Activated naive CD8-positive, alpha-beta T cell treated with anti-CD3 and anti-CD28 coated beads, Interleukin-2, amount 10 ng/mL, durations not matched to agents 7 days and 5 days (primary cell): ENCODE measurements at regions of chr2 and their contacts with region 1.

Region 1: DNA sequence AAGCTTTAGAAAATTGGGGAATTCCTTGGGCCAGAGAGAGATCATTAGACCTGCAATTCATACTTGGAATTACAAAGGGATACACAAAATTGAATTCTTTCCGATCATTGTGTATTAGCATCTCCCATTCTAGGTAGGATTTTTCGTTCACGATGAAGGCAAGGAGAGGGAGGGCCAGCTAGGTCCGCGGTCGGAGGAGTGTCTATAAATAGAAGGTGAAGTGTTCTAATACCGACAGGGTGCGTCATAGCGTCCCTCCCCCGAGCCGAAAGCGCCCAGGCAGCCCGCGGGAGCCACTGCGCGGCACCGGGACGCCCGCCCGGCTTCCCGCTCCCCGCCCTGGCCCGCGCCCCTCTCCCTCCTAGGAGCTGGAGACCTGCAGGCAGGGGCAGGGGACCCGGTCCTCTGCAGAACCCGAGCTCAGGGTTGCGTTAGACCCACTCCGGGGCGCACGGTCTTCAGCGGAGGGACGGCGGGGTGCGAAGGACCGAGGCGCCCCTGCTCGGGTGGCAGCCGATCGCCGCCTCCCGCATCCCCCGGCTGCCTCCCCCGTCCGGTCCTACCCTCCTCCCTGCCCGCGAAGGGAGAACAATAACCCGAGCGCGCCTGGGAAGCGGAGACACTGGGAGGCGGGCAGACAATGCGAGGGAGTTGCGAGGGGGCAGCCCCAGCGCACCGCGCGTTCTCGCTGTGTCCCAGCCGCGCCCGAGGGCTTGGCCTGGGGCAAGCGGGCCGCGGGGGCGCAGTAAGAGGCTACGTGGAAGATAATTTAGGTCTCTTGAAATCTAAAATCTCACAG is 114.2 kb upstream of the SERTAD2 start:
- DNase-seq: peak; percentile 83
- ATAC-seq: peak; percentile 85
- H3K4me3 Mint-ChIP-seq: peak overlapping the region; percentile 91
- H3K27ac Mint-ChIP-seq: peak overlapping the region; percentile 96
- H3K4me1 Mint-ChIP-seq: peaks cover 31% of the 10 kb centered on the region
- H3K27me3 Mint-ChIP-seq: no peaks in the 10 kb centered on the region

Region 2: DNA sequence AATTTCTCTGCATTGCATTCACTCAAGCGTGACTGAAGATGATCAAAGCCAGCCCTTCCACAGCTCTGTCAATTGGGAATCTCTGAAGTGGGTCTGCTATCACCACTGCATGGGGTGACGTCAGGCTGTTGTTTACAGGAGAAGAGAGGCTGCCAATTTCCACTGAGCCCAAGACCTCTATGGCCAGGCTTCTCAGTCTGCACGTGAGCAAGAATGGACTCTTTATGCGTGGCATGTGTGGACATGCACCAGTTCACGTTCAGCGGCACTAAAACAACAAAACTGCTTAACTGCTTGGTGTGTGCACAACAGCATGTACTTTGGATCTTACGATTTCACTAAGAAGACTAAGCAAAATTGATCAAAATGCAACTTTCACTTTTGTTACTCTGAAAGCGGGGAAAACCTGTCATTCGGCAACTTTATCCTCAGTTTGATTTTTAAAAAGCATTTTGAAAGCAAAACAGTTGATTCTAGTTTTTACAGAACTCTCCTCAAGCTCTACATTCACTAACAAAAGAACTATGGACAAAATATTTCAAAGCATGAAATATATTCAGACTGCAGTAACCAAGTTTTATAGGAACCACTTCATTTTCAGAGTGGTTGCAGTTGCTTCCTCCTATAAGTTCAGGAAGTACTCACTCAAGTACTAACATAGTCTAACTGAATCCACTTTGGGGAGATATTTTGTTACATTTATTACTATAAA is 37.2 kb before region 1 on chr2:
- POLR2A ChIA-PET with region 1: interaction called, 10 read pairs
- DNase-seq: peak; percentile 45
- ATAC-seq: peak; percentile 63
- H3K4me3 Mint-ChIP-seq: peak overlapping the region; percentile 86
- H3K27ac Mint-ChIP-seq: peak overlapping the region; percentile 95
- H3K4me1 Mint-ChIP-seq: peaks cover 56% of the 10 kb centered on the region
- H3K27me3 Mint-ChIP-seq: no peaks in the 10 kb centered on the region

Region 3: GRCh38 chr2:64819774-64820696 is 52.2 kb after region 1 on chr2:
- POLR2A ChIA-PET with region 1: interaction called, 12 read pairs
- DNase-seq: peak; percentile 37
- ATAC-seq: peak; percentile 96
- H3K4me3 Mint-ChIP-seq: peak overlapping the region; percentile 63
- H3K27ac Mint-ChIP-seq: peak overlapping the region; percentile 88
- H3K4me1 Mint-ChIP-seq: peaks cover 28% of the 10 kb centered on the region
- H3K27me3 Mint-ChIP-seq: no peaks in the 10 kb centered on the region